Naive thymus-derived CD4-positive, alpha-beta T cell (primary cell): ENCODE measurements at regions of chr7 and their contacts with region 1.

Region 1: GRCh38 chr7:17991866-17992648 is 35.6 kb downstream of the PRPS1L1 start:
- DNase-seq: no peak
- ATAC-seq: no peak
- H3K4me3 ChIP-seq: no peak overlapping the region
- H3K4me3 Mint-ChIP-seq: no peak overlapping the region
- H3K27ac ChIP-seq: no peak overlapping the region
- H3K27ac Mint-ChIP-seq: no peak overlapping the region
- H3K4me1 ChIP-seq: no peaks in the 10 kb centered on the region
- H3K4me1 Mint-ChIP-seq: no peaks in the 10 kb centered on the region
- H3K27me3 ChIP-seq: no peaks in the 10 kb centered on the region
- H3K27me3 Mint-ChIP-seq: peaks cover 7 to 10% (median 9%) of the 10 kb centered on the region in 5 donors

Region 2: DNA sequence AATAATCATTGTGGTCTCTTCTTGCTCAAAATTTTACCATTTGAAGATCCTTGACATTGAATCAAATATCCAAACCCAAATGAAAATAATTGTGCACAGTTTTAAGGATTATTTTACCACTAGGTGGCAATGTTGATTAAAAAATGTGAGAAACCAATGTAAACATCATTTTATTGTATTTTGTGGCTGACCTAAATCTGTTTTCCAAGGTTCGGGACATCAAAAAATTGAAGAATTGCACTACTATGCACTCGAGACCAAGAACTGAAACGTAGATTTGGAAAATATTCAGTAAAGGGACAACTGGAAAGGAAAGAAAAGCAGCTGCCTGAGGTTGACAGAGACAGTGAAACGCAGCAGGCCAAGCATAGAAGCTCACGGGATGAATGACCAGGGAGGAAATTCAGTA is 311.1 kb before region 1 on chr7:
- CTCF ChIA-PET with region 1: no interaction called
- POLR2A ChIA-PET with region 1: no interaction called
- intact Hi-C with region 1: loop called in 1 of 2 experiments (anchors 1 kb)
- DNase-seq: peak in 4 of 9 donors; percentile 12 to 35 (median 18)
- ATAC-seq: no peak
- H3K4me3 ChIP-seq: no peak overlapping the region
- H3K4me3 Mint-ChIP-seq: no peak overlapping the region
- H3K27ac ChIP-seq: no peak overlapping the region
- H3K27ac Mint-ChIP-seq: no peak overlapping the region
- H3K4me1 ChIP-seq: no peaks in the 10 kb centered on the region
- H3K4me1 Mint-ChIP-seq: no peaks in the 10 kb centered on the region
- H3K27me3 ChIP-seq: no peaks in the 10 kb centered on the region
- H3K27me3 Mint-ChIP-seq: peaks cover 0 to 2% (median 0%) of the 10 kb centered on the region in 5 donors

Region 3: DNA sequence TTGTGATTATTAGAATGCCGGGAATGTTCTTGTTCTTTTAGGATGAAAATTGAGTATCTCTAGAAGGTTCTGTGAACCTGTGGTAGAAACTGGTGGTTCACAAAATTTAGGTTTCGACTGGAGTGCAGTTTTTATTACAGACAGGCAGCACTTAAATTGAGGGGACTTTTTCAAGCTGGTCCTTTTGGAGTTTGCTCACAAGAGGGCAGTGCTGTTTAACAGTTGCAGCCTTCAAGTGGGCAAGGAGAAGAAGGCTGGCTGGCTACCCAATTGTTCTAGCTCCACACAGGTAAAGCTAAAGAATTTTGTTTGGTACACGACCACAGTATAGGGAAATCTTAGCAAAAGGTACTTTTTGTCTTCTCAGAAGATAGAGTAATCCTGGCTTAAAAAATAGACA is 285.3 kb before region 1 on chr7:
- CTCF ChIA-PET with region 1: no interaction called
- POLR2A ChIA-PET with region 1: no interaction called
- intact Hi-C with region 1: loop called in 1 of 2 experiments (anchors 10 kb)
- DNase-seq: peak in 5 of 9 donors; percentile 5 to 15 (median 8)
- ATAC-seq: peak; percentile 54
- H3K4me3 ChIP-seq: no peak overlapping the region
- H3K4me3 Mint-ChIP-seq: no peak overlapping the region
- H3K27ac ChIP-seq: no peak overlapping the region
- H3K27ac Mint-ChIP-seq: no peak overlapping the region
- H3K4me1 ChIP-seq: no peaks in the 10 kb centered on the region
- H3K4me1 Mint-ChIP-seq: no peaks in the 10 kb centered on the region
- H3K27me3 ChIP-seq: no peaks in the 10 kb centered on the region
- H3K27me3 Mint-ChIP-seq: peaks cover 0 to 16% (median 2%) of the 10 kb centered on the region in 5 donors

Region 4: DNA sequence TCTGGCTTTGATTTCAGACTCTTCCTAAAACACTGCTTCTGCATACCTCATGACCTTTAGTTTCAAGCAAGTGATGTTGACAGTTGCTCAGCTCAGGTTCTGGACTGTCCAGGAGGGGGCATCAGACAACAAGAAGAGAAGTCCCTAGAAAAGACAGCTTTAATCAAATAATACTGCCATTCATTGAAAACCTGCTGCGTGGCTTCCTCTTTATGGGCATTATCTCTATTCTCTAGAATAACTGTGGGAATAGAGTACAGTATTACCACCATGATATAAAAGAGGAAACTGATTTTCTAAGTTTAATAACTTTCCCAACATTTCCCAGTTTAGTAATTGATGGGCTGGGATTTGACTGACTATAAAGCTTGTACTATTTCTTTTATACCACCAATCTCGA is 222.1 kb before region 1 on chr7:
- CTCF ChIA-PET with region 1: interaction called, 3 read pairs
- POLR2A ChIA-PET with region 1: no interaction called
- intact Hi-C with region 1: loop called (anchors 1 to 2 kb)
- DNase-seq: peak in 8 of 9 donors; percentile 4 to 47 (median 30)
- ATAC-seq: peak; percentile 70
- H3K4me3 ChIP-seq: no peak overlapping the region
- H3K4me3 Mint-ChIP-seq: no peak overlapping the region
- H3K27ac ChIP-seq: no peak overlapping the region
- H3K27ac Mint-ChIP-seq: no peak overlapping the region
- H3K4me1 ChIP-seq: no peaks in the 10 kb centered on the region
- H3K4me1 Mint-ChIP-seq: peaks cover 0 to 4% (median 0%) of the 10 kb centered on the region in 7 donors
- H3K27me3 ChIP-seq: no peaks in the 10 kb centered on the region
- H3K27me3 Mint-ChIP-seq: no peaks in the 10 kb centered on the region

Region 5: GRCh38 chr7:18013936-18014335 is 21.9 kb after region 1 on chr7:
- CTCF ChIA-PET with region 1: no interaction called
- POLR2A ChIA-PET with region 1: no interaction called
- intact Hi-C with region 1: no loop called
- DNase-seq: no peak
- ATAC-seq: no peak
- H3K4me3 ChIP-seq: no peak overlapping the region
- H3K4me3 Mint-ChIP-seq: no peak overlapping the region
- H3K27ac ChIP-seq: no peak overlapping the region
- H3K27ac Mint-ChIP-seq: no peak overlapping the region
- H3K4me1 ChIP-seq: no peaks in the 10 kb centered on the region
- H3K4me1 Mint-ChIP-seq: no peaks in the 10 kb centered on the region
- H3K27me3 ChIP-seq: peaks cover 0 to 2% of the 10 kb centered on the region in 2 donors
- H3K27me3 Mint-ChIP-seq: peaks cover 0 to 43% (median 37%) of the 10 kb centered on the region in 5 donors

Region 6: GRCh38 chr7:18829858-18830285 is 837.8 kb after region 1 on chr7:
- CTCF ChIA-PET with region 1: no interaction called
- POLR2A ChIA-PET with region 1: no interaction called
- intact Hi-C with region 1: no loop called
- DNase-seq: no peak
- ATAC-seq: no peak
- H3K4me3 ChIP-seq: no peak overlapping the region
- H3K4me3 Mint-ChIP-seq: no peak overlapping the region
- H3K27ac ChIP-seq: no peak overlapping the region
- H3K27ac Mint-ChIP-seq: no peak overlapping the region
- H3K4me1 ChIP-seq: no peaks in the 10 kb centered on the region
- H3K4me1 Mint-ChIP-seq: peaks cover 0 to 9% (median 0%) of the 10 kb centered on the region in 7 donors
- H3K27me3 ChIP-seq: no peaks in the 10 kb centered on the region
- H3K27me3 Mint-ChIP-seq: no peaks in the 10 kb centered on the region